Activated CD8-positive, alpha-beta memory T cell treated with anti-CD3 and anti-CD28 coated beads, Interleukin-2, amount 10 ng/mL, durations not matched to agents 7 days and 5 days (primary cell): ENCODE measurements at regions of chr5 and their contacts with region 1.

Region 1: DNA sequence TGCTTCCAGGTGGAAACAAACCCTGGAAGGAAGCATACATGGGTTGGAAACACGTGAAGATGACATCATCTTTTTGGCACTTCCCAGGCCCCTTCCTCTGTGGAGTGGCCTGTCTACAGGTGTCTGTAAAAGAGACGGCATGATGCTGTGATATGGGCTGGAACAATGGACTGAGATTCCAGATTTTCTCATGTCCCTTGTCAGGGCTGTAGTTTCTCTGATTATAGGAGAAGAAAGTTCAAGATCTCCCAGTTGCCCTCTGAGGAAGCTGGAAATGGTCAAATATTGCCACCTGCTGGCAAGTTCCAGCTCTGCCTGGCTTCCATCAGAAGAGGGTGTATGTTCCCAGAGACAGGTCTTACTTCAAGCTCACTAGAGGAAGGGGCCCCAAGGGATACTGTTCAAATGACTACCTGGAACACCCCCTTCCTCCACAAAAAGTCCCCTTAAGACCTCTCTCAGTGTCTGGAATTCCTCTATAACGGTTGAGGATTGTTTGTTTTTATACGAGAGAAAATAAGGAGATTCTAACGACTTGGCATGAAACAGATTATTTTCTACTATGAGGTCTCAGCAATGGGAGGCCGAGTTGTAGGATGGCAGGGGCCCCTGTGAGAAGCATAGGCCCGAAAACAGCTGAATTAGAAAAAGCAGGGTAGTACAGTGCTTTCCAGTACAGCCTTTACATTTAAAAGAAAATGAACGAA is 7.3 kb upstream of the ANXA6 start:
- DNase-seq: peak; percentile 86
- ATAC-seq: peak; percentile 98
- H3K4me3 Mint-ChIP-seq: no peak overlapping the region
- H3K27ac Mint-ChIP-seq: no peak overlapping the region
- H3K4me1 Mint-ChIP-seq: peaks cover 4% of the 10 kb centered on the region
- H3K27me3 Mint-ChIP-seq: no peaks in the 10 kb centered on the region

Region 2: GRCh38 chr5:151132963-151133362 is 31.9 kb before region 1 on chr5:
- CTCF ChIA-PET with region 1: interaction called, 260 read pairs
- DNase-seq: no peak
- ATAC-seq: no peak
- H3K4me3 Mint-ChIP-seq: no peak overlapping the region
- H3K27ac Mint-ChIP-seq: no peak overlapping the region
- H3K4me1 Mint-ChIP-seq: peaks cover 40% of the 10 kb centered on the region
- H3K27me3 Mint-ChIP-seq: no peaks in the 10 kb centered on the region

Region 3: DNA sequence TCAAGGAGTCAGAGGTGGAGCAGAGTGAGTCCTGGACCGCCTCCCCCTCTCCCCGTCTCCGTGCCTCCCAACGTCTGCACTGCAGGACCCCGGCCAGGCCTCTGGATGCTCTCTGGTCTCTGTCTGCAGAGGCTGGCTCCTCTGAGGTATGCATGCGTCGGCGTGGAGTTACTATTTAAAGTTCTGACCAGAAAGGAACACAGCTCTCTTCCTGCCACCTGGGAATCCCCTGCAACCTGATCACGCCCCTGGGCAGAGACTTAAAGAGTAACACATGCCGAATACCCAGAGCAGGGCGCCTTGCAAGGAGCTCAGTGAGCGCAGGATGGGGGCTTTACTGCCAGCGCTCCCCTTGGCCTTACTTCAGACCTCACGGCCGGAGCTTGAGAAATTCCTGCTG is 23.3 kb before region 1 on chr5:
- CTCF ChIA-PET with region 1: interaction called, 39 read pairs
- DNase-seq: peak; percentile 77
- ATAC-seq: peak; percentile 78
- H3K4me3 Mint-ChIP-seq: peak overlapping the region; percentile 46
- H3K27ac Mint-ChIP-seq: peak overlapping the region; percentile 72
- H3K4me1 Mint-ChIP-seq: peaks cover 93% of the 10 kb centered on the region
- H3K27me3 Mint-ChIP-seq: no peaks in the 10 kb centered on the region

Region 4: DNA sequence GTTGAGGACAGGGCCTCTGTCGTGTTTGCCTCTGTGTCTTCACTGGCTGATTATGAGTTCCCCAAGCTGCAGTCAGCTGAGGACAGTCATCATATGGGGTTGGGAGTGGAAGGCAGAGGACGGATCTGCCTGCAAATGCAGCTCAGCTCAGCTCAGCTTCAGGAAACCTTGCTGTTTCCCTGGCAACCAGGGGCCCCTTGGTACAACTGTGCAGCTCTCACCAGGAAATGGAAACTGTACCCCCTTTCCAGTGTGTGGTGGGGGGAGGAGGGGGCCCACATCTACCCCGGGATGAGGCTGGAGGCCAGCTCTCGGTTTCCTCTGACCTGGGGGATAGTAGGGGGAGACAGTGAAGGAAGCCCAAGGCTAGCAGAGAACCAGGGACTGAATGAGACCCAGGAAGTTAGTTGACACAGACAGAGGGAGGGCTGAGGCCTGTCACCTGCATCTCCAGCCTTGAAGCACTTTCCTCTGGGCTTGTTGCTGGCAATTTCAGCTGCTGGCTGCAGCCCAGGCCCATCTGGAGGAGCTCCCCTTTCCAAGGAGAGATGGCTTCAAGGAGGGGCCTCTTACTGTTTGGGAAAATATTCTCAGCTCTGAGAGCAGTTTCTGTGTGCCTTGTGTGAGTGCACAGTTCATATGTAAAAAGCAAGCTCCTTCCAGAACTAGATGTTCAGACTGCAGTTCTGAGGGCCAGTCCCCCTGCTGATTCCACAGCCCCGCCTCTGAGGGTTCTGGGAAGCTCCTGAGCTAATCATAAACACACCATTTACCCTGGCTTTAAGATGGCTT is 14.2 kb before region 1 on chr5:
- CTCF ChIA-PET with region 1: interaction called, 34 read pairs
- DNase-seq: peak; percentile 92
- ATAC-seq: peak; percentile 74
- H3K4me3 Mint-ChIP-seq: peak overlapping the region; percentile 62
- H3K27ac Mint-ChIP-seq: peak overlapping the region; percentile 89
- H3K4me1 Mint-ChIP-seq: peaks cover 86% of the 10 kb centered on the region
- H3K27me3 Mint-ChIP-seq: no peaks in the 10 kb centered on the region

Region 5: GRCh38 chr5:151213800-151214613 is 49.2 kb after region 1 on chr5:
- CTCF ChIA-PET with region 1: interaction called, 29 read pairs
- DNase-seq: peak; percentile 96
- ATAC-seq: peak; percentile 86
- H3K4me3 Mint-ChIP-seq: peak overlapping the region; percentile 86
- H3K27ac Mint-ChIP-seq: peak overlapping the region; percentile 98
- H3K4me1 Mint-ChIP-seq: peaks cover 78% of the 10 kb centered on the region
- H3K27me3 Mint-ChIP-seq: no peaks in the 10 kb centered on the region